Right cardiac atrium (tissue), 5 donors: ENCODE measurements at regions of chr15 and their contacts with region 1.

Region 1: GRCh38 chr15:25883463-25884259 is 20.5 kb upstream of the ATP10A start:
- DNase-seq: no peak
- ATAC-seq: no peak
- H3K4me3 ChIP-seq: no peak overlapping the region
- H3K27ac ChIP-seq: no peak overlapping the region
- H3K4me1 ChIP-seq: no peaks in the 10 kb centered on the region
- H3K27me3 ChIP-seq: no peaks in the 10 kb centered on the region

Region 2: GRCh38 chr15:25790000-25790660 is 93.5 kb before region 1 on chr15:
- intact Hi-C with region 1: loop called in 1 of 4 experiments (anchors 10 kb)
- DNase-seq: peak in 2 of 3 donors; percentile 47 to 77
- ATAC-seq: peak; percentile 67 to 74
- H3K4me3 ChIP-seq: no peak overlapping the region
- H3K27ac ChIP-seq: no peak overlapping the region
- H3K4me1 ChIP-seq: peaks cover 7% of the 10 kb centered on the region
- H3K27me3 ChIP-seq: no peaks in the 10 kb centered on the region